ENCODE measurements at regions of chr2 and their contacts with region 1.

Region 1: DNA sequence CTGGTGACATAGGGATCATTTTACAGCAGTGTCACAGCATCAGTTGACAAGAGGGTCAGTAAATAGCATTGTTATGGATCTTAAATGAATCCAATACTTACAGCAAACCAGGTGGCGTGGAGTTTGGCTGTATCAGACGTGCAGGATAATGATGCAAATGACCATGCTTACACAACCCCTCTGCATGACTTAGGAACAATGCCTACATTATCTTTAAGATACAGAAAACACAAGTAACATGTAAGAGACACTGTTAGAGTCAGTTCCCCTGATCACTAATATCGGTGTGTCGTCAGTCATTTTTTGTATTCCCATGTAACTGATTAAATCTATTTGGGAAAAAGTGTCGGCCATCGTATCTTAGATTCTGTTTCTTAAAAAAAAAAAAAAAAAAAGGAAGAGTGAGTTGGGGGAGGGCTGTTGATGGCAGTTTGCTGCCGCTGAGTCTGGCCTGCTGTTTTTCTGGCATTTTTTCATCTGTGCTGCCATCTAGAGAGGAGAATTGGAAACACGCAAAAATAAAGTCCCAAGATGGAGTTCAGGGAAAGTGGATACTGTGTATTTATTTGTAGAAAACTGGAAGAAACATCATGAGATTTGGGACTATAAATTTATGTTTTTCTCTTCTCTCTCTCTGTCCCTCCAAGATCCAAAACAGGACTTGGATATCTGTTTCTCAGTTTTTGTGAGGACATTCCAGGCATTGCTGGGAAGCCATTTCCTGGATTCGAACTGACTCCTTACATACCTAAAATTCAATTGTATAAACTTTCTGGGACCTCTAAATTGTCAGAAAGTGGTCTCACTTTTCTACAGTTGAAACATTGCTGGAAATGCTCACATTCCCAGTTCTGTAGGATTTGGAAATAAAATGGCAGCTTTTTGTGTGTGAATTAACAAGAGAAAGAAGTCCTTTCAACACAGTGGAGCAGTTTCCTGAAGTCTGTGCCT is 60.3 kb upstream of the AGPS start:
- DNase-seq: peak; percentile 41
- ATAC-seq: peak; percentile 81 to 88

Region 2: GRCh38 chr2:177263451-177264208 is 68.7 kb before region 1 on chr2:
- intact Hi-C with region 1: loop called in 1 of 2 experiments (anchors 2 kb)
- DNase-seq: peak; percentile 98
- ATAC-seq: peak; percentile 74 to 75

Region 3: DNA sequence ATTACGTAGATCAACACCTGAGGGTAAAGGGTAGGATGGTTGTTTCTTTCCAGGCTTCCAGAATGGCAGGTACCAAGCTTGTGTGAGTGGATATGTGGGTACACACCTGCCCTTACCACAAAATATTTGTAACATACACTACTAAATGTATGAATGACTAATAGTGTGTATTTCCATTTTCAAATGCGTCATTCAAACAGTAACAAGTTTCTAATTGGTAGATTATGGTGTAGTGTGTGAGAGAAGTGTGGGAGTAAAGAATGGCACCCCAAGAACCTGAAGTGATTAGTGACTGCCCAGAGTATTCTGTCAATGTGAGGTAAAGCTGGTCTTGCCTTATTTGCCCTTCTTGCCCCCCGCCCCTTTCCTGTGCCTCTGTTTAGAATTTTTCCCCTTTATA is 81.4 kb after region 1 on chr2:
- intact Hi-C with region 1: loop called (anchors 2 to 5 kb)
- DNase-seq: no peak
- ATAC-seq: no peak

Region 4: GRCh38 chr2:177419274-177419673 is 87.0 kb after region 1 on chr2:
- intact Hi-C with region 1: loop called (anchors 2 to 5 kb)
- DNase-seq: no peak
- ATAC-seq: peak; percentile 38 to 51

Region 5: GRCh38 chr2:177445200-177445599 is 112.9 kb after region 1 on chr2:
- intact Hi-C with region 1: no loop called
- DNase-seq: no peak
- ATAC-seq: no peak

Region 6: DNA sequence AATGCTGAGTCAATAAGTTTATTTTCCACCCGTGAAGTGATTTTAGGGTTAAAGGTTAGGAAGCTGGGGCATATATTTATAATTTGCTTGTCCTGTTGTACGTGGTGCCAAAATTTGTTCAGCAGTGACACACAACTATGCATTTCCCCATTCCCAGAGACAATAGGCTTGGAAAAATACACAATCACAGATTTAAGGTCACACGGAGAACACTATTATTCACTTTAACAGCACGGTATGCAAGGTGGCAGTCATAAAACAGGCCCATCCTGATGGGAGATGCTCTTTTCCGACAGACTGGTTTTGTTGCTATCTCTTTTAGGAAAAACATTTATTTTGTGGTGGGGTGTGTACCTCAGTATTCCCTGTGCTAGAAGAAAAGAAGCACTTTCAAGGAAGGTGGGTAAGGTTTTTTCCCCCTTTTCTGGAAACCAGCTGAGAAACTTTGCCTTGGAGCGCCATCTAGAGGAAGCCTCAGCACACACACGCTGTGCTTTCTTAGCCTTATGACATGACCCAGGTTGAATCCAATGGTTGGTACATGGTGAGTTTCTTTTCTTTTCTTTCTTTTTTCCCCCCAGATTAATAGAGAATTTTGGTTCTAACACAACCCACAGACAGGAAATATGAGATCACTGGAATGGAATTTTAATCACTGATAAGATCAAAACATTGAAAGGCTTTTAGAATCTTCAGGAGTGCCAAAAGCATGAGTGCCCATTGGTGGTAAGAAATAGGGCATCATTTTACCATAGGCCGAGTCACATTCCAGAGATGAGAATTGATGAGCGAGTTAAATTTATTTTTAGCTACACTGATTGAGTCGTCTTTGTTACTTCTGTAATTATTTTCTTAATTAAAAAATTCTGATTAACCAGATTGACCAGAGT is 392.3 kb after region 1 on chr2:
- intact Hi-C with region 1: loop called in 1 of 2 experiments (anchors 10 kb)
- DNase-seq: peak; percentile 41
- ATAC-seq: peak; percentile 66 to 71

Region 7: GRCh38 chr2:177763532-177764265 is 431.4 kb after region 1 on chr2:
- intact Hi-C with region 1: loop called (anchors 5 to 10 kb)
- DNase-seq: peak; percentile 84
- ATAC-seq: peak; percentile 85 to 90